SK-N-SH (cell line): ENCODE measurements at regions of chr11 and their contacts with region 1.

Region 1: GRCh38 chr11:45233121-45233803 is 52.9 kb downstream of the SYT13 start:
- DNase-seq: peak; percentile 91
- H3K4me3 ChIP-seq: no peak overlapping the region
- H3K27ac ChIP-seq: no peak overlapping the region
- H3K4me1 ChIP-seq: peaks cover 0 to 2% of the 10 kb centered on the region in 2 experiments; a peak in 1 of 4 replicates
- H3K27me3 ChIP-seq: no peaks in the 10 kb centered on the region; the same call in 1 of the 2 replicates
- CTCF ChIP-seq: peak; percentile 79
- EP300 ChIP-seq: no peak
- RAD21 ChIP-seq: peak; percentile 53

Region 2: DNA sequence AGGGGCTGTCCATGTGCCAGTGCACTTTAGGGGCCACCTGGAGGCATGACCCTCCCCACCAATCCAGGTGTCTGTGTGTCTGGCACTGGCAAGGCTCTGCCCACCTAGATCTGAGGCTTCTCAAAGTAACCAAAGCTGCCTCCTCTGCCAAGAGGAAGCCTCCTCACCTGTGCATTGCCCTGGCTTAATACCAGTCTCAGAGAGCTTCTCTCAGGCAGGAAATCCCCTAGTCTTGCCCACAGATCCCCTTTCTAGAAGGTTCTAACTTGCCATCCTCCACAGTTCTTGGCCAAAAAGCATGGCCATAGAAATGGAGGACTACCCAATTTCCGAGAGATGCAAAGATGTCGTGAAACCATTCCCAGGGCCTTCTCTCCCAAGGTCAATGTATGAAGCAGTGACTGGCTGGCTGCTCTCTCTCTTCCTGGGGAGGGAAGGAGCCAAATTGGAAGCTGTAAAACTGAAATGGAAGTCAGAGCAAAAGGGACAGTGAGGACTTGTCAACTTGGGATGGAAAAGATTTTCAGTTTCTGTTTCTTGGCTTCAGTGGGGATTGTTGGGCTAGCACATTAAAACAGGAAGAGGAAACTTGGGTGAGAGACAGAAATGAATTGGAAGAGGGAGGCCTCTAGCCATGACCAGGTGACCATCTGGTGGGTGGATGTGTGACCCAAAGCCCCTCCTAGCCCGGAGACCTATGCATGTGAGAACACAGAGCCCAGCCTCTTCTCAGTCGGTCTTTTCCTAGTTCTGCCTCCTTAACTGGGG is 18.0 kb before region 1 on chr11:
- CTCF ChIA-PET with region 1: interaction called, 10 read pairs
- POLR2A ChIA-PET with region 1: no interaction called
- DNase-seq: no peak
- H3K4me3 ChIP-seq: no peak overlapping the region
- H3K27ac ChIP-seq: no peak overlapping the region
- H3K4me1 ChIP-seq: no peaks in the 10 kb centered on the region
- H3K27me3 ChIP-seq: no peaks in the 10 kb centered on the region
- CTCF ChIP-seq: no peak
- EP300 ChIP-seq: no peak
- RAD21 ChIP-seq: no peak

Region 3: GRCh38 chr11:45245218-45246045 is 12.2 kb after region 1 on chr11:
- CTCF ChIA-PET with region 1: interaction called, 40 read pairs
- POLR2A ChIA-PET with region 1: interaction called, 4 read pairs
- DNase-seq: no peak
- H3K4me3 ChIP-seq: no peak overlapping the region
- H3K27ac ChIP-seq: no peak overlapping the region
- H3K4me1 ChIP-seq: peaks cover 0 to 6% of the 10 kb centered on the region in 2 experiments; a peak in 1 of 4 replicates
- H3K27me3 ChIP-seq: 0 out of 2 replicates have a peak, but pooled peaks cover 7% of the 10 kb centered on the region
- CTCF ChIP-seq: no peak
- EP300 ChIP-seq: no peak
- RAD21 ChIP-seq: no peak

Region 4: GRCh38 chr11:45252134-45252855 is 19.0 kb after region 1 on chr11:
- CTCF ChIA-PET with region 1: interaction called, 11 read pairs
- POLR2A ChIA-PET with region 1: no interaction called
- DNase-seq: peak; percentile 63
- H3K4me3 ChIP-seq: no peak overlapping the region
- H3K27ac ChIP-seq: no peak overlapping the region
- H3K4me1 ChIP-seq: peaks cover 0 to 3% of the 10 kb centered on the region in 2 experiments; a peak in 1 of 4 replicates
- H3K27me3 ChIP-seq: peaks cover 3% of the 10 kb centered on the region; the same call in 1 of the 2 replicates
- CTCF ChIP-seq: peak; percentile 66
- EP300 ChIP-seq: no peak
- RAD21 ChIP-seq: peak; percentile 37; the same call in 1 of the 2 replicates

Region 5: DNA sequence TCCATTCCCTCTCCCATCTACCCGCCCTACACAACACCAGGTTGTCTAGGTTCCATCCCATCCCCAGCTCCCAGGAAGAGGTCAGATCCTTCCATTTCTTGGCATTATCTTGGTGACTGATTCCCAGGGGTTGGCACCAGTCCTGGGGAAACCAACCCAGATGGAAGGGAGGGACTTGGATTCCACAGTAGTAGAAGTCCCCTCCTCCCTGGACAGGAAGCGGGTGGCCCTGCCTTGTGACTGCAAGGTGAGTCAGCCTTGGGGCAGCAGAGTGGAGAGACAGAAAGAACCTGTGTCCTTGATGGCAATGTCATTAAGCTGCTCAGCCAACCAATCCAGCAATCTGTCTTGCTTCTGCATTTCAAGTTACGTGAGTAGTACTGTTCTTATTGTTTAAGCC is 26.3 kb after region 1 on chr11:
- CTCF ChIA-PET with region 1: interaction called, 10 read pairs
- POLR2A ChIA-PET with region 1: no interaction called
- DNase-seq: no peak
- H3K4me3 ChIP-seq: no peak overlapping the region
- H3K27ac ChIP-seq: peak overlapping the region in 1 of 2 experiments; percentile 10; a peak in 2 of 4 replicates
- H3K4me1 ChIP-seq: no peaks in the 10 kb centered on the region; a peak in 1 of 4 replicates
- H3K27me3 ChIP-seq: no peaks in the 10 kb centered on the region
- CTCF ChIP-seq: no peak
- EP300 ChIP-seq: no peak
- RAD21 ChIP-seq: no peak

Region 6: DNA sequence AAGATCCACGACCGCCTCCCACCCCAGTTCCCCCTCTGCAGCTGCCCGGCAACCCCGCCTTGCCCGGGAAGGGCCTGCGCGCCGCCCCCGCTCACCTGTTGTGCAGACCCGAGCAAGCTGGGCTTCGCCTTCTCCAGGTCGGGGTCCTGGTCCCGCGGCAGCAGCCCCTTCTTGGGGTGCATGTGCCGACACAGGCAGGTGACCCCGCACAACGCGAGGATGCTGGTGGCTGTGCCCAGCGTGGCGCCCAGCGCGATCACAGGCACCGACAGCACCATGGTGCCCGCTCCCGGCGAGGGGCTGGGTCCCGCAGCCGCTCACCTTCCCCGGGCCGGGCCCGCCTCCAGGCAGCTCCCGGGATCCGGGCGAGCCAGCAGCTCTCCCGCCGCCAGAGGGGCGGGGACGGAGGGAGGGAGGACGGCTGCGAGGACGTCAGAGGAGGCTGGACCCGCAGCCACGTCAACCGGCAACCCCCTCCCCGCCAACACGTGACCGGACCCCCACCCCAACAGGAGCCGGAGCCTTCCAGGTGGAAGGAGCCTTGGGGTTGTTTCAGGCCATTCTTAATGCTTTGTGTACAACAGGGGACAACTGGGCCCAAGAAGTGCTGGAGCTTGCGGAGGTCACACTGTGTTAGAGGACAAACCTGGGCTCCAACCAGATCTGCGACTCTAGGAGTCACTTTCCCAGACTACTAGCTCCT is 52.8 kb after region 1 on chr11 and contains the start of gene SYT13:
- CTCF ChIA-PET with region 1: interaction called, 23 read pairs
- POLR2A ChIA-PET with region 1: no interaction called
- DNase-seq: peak; percentile 87
- H3K4me3 ChIP-seq: peak within 1 kb of the TSS in 1 of 2 experiments; percentile 43; a peak in 2 of 4 replicates
- H3K27ac ChIP-seq: no peak within 1 kb of the TSS
- H3K4me1 ChIP-seq: peaks cover 0 to 7% of the 10 kb centered on the region in 2 experiments; a peak in 1 of 4 replicates
- H3K27me3 ChIP-seq: peaks cover 55% of the 10 kb centered on the region
- CTCF ChIP-seq: no peak
- EP300 ChIP-seq: no peak
- RAD21 ChIP-seq: no peak
- polyA plus RNA-seq, gene SYT13: not detected in 2 replicates

Region 7: DNA sequence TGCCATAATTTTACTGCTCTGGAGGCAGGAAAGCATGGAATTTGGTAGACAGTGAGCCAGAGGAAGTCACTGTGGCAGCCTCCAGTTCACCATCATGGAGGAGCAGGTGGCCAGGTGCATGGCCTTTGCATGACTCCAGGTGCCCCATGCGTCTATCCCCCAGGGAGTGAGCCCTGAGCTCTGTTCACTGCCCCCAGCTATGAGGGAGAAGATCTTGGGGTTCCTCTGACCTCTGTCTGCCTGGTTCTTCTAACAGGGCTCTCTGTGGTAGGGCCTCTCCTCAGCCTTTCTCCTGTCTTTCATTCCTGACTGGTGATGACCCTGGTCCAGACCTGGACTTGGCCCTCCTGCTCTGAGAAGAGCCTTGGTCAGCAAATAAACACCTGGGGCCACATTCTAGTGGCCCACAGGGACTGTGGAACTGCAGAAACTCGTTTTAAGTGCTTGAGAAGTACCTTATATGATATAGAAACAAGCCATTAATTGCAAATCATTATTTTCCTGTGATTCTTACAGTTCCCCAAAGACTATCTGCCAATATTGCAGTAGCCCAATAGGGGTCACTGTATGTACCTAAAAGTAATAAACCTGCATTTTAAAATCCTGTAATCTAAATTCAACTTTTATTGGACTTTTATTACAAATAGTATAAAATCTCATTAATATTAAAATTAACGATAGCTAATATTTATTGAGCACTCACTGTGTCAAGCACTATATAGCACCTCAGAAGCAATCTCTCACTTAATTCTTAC is 172.8 kb after region 1 on chr11:
- CTCF ChIA-PET with region 1: no interaction called
- POLR2A ChIA-PET with region 1: no interaction called
- DNase-seq: no peak
- H3K4me3 ChIP-seq: no peak overlapping the region
- H3K27ac ChIP-seq: no peak overlapping the region
- H3K4me1 ChIP-seq: peaks cover 11 to 14% of the 10 kb centered on the region in 2 experiments; a peak in 3 of 4 replicates
- H3K27me3 ChIP-seq: no peaks in the 10 kb centered on the region
- CTCF ChIP-seq: peak; percentile 73
- EP300 ChIP-seq: no peak
- RAD21 ChIP-seq: peak; percentile 68